Aorta (tissue), 5 donors: ENCODE measurements at regions of chrX and their contacts with region 1.

Region 1: GRCh38 chrX:25144043-25144940 is 128.5 kb upstream of the ARX start:
- DNase-seq: peak; percentile 73 to 80
- ATAC-seq: peak; percentile 63
- H3K4me3 ChIP-seq: peak overlapping the region; percentile 4 to 11
- H3K27ac ChIP-seq: no peak overlapping the region
- H3K4me1 ChIP-seq: no peaks in the 10 kb centered on the region
- H3K27me3 ChIP-seq: no peaks in the 10 kb centered on the region

Region 2: GRCh38 chrX:24371391-24371972 is 772.8 kb before region 1 on chrX:
- intact Hi-C with region 1: loop called in 1 of 2 experiments (anchors 10 kb)
- DNase-seq: peak in 1 of 2 donors; percentile 69
- ATAC-seq: peak; percentile 78
- H3K4me3 ChIP-seq: no peak overlapping the region
- H3K27ac ChIP-seq: no peak overlapping the region
- H3K4me1 ChIP-seq: no peaks in the 10 kb centered on the region
- H3K27me3 ChIP-seq: no peaks in the 10 kb centered on the region

Region 3: DNA sequence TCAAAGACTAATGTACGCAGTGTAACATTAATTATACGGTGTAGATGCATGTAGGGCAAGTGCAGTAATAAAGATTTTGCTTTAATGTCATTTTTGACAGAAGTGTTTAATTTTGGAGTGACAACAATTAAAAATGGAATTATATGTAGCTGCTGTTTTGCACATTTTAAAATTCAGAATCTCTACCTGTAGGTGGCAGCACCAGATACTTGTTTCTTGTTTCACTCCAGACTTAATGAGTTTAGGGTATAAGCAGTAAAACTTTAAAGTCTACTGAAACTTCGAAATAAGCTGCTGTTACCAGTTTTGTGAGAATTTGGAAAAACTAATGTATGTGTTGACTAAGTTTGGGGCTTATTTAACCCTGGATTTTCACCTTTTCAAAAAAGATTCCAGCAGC is 305.7 kb before region 1 on chrX:
- intact Hi-C with region 1: loop called (anchors 5 kb)
- DNase-seq: no peak
- ATAC-seq: no peak
- H3K4me3 ChIP-seq: no peak overlapping the region
- H3K27ac ChIP-seq: no peak overlapping the region
- H3K4me1 ChIP-seq: no peaks in the 10 kb centered on the region
- H3K27me3 ChIP-seq: no peaks in the 10 kb centered on the region